ENCODE measurements at regions of chr18 and their contacts with region 1.

Region 1: DNA sequence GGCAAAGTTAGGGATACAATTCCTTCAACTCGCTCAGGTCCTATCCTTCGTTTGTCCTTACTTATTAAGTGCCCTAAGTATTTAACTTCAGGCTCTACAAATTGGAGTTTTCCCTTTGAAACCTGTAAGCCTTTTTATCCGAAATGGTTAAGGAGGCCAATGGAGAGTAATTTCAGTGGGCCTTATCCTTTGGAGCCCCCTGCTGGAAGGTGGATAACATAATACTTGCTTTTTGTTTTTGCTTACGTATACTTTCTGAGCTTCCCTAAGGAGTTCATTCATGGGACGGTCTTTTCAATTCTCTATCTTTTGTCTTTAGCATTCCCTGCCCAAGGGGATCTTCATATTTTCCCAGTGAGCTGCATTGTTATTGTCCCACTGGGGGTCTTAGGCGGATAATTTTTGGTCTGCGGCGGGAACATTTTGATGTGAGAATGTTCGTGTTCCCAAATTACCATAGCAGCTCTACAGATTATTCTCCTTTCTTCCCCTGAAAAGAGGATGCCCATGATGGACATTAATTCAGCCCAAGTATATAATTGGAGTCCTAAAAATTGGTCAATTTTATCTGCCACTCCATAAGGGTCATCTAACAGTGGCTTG is 34.4 kb upstream of the TRAPPC8 start:
- DNase-seq: peak; percentile 56
- ATAC-seq: peak; percentile 92
- H3K4me3 Mint-ChIP-seq: no peak overlapping the region
- H3K27ac Mint-ChIP-seq: no peak overlapping the region
- H3K4me1 Mint-ChIP-seq: peaks cover 16% of the 10 kb centered on the region
- H3K27me3 Mint-ChIP-seq: no peaks in the 10 kb centered on the region; the same call in 1 of the 2 replicates
- CTCF ChIP-seq: peak; percentile 51

Region 2: DNA sequence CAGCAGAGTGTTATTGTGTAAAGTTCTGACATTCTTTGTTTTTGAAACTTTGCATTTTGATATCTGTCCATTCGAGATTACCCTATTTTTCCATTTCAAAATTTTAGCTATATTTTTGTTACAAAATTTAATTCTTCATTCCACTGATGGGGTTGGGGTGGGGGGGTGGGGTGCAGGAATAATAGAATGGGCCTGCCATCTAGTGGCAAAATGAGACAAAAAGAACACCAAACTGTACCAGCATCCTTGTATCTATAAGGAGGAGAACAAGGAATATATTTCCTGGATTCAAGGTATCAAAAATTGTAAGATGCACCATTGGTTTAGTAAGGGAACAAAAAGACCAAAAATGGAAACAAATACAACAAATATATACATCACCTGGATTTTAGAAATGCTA is 413.6 kb before region 1 on chr18:
- CTCF ChIA-PET with region 1: interaction called, 10 read pairs
- POLR2A ChIA-PET with region 1: no interaction called
- DNase-seq: no peak
- ATAC-seq: no peak
- H3K4me3 Mint-ChIP-seq: no peak overlapping the region
- H3K27ac Mint-ChIP-seq: no peak overlapping the region
- H3K4me1 Mint-ChIP-seq: peaks cover 12% of the 10 kb centered on the region; the same call in 1 of the 2 replicates
- H3K27me3 Mint-ChIP-seq: no peaks in the 10 kb centered on the region
- CTCF ChIP-seq: no peak

Region 3: GRCh38 chr18:31722369-31722957 is 254.9 kb before region 1 on chr18:
- CTCF ChIA-PET with region 1: interaction called, 17 read pairs
- POLR2A ChIA-PET with region 1: no interaction called
- DNase-seq: peak; percentile 91
- ATAC-seq: peak; percentile 97
- H3K4me3 Mint-ChIP-seq: no peak overlapping the region
- H3K27ac Mint-ChIP-seq: peak overlapping the region; percentile 18
- H3K4me1 Mint-ChIP-seq: peaks cover 9% of the 10 kb centered on the region
- H3K27me3 Mint-ChIP-seq: peaks cover 6% of the 10 kb centered on the region
- CTCF ChIP-seq: peak; percentile 90

Region 4: DNA sequence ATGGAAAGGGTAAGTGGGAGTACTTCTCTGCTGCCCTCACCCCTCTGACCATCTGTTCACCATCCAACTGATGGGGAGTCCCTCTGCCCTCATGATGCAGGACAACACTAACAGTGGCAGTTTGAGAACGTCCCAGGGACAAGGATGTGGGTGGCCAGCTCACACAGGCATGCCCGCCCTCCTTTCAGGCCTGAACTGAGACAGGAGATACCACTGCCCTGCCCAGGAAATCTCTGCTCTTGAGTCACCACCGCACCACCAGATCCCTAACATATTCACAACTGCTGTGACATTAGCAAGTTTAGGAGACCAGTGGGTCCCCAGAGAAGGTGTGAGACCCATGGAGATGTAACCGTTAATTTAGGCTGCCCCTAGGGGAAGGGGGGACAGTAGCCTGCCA is 100.7 kb before region 1 on chr18:
- CTCF ChIA-PET with region 1: no interaction called
- POLR2A ChIA-PET with region 1: no interaction called
- DNase-seq: no peak
- ATAC-seq: no peak
- H3K4me3 Mint-ChIP-seq: no peak overlapping the region
- H3K27ac Mint-ChIP-seq: peak overlapping the region; percentile 35; the same call in 1 of the 2 replicates
- H3K4me1 Mint-ChIP-seq: no peaks in the 10 kb centered on the region
- H3K27me3 Mint-ChIP-seq: no peaks in the 10 kb centered on the region
- CTCF ChIP-seq: no peak

Region 5: GRCh38 chr18:31965316-31965970 is 11.9 kb before region 1 on chr18:
- CTCF ChIA-PET with region 1: interaction called, 13 read pairs
- POLR2A ChIA-PET with region 1: no interaction called
- DNase-seq: no peak
- ATAC-seq: no peak
- H3K4me3 Mint-ChIP-seq: no peak overlapping the region
- H3K27ac Mint-ChIP-seq: no peak overlapping the region
- H3K4me1 Mint-ChIP-seq: peaks cover under 1% of the 10 kb centered on the region; the same call in 1 of the 2 replicates
- H3K27me3 Mint-ChIP-seq: peaks cover 5% of the 10 kb centered on the region; the same call in 1 of the 2 replicates
- CTCF ChIP-seq: no peak

Region 6: GRCh38 chr18:32040936-32041335 is 63.6 kb after region 1 on chr18:
- CTCF ChIA-PET with region 1: no interaction called
- POLR2A ChIA-PET with region 1: no interaction called
- DNase-seq: no peak
- ATAC-seq: no peak
- H3K4me3 Mint-ChIP-seq: no peak overlapping the region
- H3K27ac Mint-ChIP-seq: no peak overlapping the region
- H3K4me1 Mint-ChIP-seq: no peaks in the 10 kb centered on the region
- H3K27me3 Mint-ChIP-seq: no peaks in the 10 kb centered on the region
- CTCF ChIP-seq: no peak